Aorta (tissue), 5 donors: ENCODE measurements at regions of chr1 and their contacts with region 1.

Region 1: GRCh38 chr1:168225476-168226190 is at the start of gene SFT2D2:
- DNase-seq: peak; percentile 83 to 93
- ATAC-seq: peak; percentile 93
- H3K4me3 ChIP-seq: peak within 1 kb of the TSS; percentile 70 to 90
- H3K27ac ChIP-seq: peak within 1 kb of the TSS; percentile 67 to 91
- H3K4me1 ChIP-seq: peaks cover 0 to under 1% of the 10 kb centered on the region in 2 donors
- H3K27me3 ChIP-seq: no peaks in the 10 kb centered on the region
- total RNA-seq, gene SFT2D2: 94.6 to 107 TPM

Region 2: DNA sequence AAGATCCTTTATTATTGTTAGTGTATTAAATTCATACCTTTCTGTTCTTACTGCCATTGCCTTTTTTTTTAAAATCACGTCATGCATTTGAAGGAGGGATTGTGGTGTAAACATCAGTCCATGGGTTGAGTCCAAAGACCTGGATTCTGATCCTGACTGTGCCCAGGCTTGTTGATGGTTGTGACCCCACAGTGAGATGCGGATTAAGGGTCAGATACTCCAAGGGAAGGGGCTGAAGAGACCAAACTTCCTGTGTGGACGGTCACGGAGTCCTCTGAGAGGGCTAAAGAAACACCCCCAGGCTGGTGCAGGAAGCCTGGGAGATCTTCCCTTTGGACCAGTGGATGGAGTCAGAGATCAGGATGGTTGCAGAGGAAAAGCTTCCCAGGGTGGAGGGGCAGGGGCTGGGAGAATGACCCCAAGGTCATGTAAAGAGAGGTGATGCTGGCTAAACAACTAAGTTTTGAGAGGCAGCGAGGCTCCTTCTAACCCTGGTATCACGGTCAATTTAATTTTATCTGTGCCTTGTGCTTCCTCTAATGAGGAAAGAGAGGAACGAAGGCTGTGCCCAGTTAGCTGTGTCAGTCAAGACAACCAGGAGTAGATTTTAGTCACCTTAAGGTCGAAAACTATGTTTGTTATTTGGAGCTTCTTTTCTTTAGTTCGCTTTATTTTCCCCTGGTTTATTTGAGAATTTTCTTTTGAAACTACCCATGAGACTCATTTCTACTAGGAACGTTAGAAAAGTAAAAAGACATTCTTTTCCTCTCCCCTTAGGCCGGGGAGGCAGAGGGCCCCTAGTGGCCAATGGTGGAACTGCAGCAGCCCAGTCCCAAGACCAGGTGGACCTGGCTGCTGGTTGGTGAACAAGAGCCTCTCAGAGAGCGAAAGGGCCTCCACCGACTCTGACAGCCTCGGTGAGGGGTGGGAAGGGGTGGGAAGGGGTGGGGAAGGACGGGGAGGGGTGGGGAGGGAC is 80.2 kb before region 1 on chr1:
- intact Hi-C with region 1: loop called in 1 of 2 experiments (anchors 10 kb)
- DNase-seq: peak; percentile 94 to 97
- ATAC-seq: peak; percentile 87
- H3K4me3 ChIP-seq: no peak overlapping the region
- H3K27ac ChIP-seq: no peak overlapping the region
- H3K4me1 ChIP-seq: no peaks in the 10 kb centered on the region
- H3K27me3 ChIP-seq: no peaks in the 10 kb centered on the region

Region 3: GRCh38 chr1:168178638-168179437 is 46.8 kb before region 1 on chr1 and contains the start of gene TIPRL:
- intact Hi-C with region 1: loop called in 1 of 2 experiments (anchors 2 kb)
- DNase-seq: peak; percentile 98
- ATAC-seq: peak; percentile 99
- H3K4me3 ChIP-seq: peak within 1 kb of the TSS; percentile 64 to 72
- H3K27ac ChIP-seq: peak within 1 kb of the TSS; percentile 67 to 85
- H3K4me1 ChIP-seq: peaks cover 2 to 3% of the 10 kb centered on the region in 2 donors
- H3K27me3 ChIP-seq: no peaks in the 10 kb centered on the region
- total RNA-seq, gene TIPRL: 25.1 to 28.9 TPM

Region 4: GRCh38 chr1:168261390-168261789 is 35.8 kb after region 1 on chr1:
- intact Hi-C with region 1: loop called in 1 of 2 experiments (anchors 5 kb)
- DNase-seq: no peak
- ATAC-seq: peak; percentile 59
- H3K4me3 ChIP-seq: no peak overlapping the region
- H3K27ac ChIP-seq: peak overlapping the region; percentile 67 to 95
- H3K4me1 ChIP-seq: peaks cover 4 to 11% of the 10 kb centered on the region in 2 donors
- H3K27me3 ChIP-seq: no peaks in the 10 kb centered on the region